ENCODE measurements at regions of chr19 and their contacts with region 1.

Region 1: DNA sequence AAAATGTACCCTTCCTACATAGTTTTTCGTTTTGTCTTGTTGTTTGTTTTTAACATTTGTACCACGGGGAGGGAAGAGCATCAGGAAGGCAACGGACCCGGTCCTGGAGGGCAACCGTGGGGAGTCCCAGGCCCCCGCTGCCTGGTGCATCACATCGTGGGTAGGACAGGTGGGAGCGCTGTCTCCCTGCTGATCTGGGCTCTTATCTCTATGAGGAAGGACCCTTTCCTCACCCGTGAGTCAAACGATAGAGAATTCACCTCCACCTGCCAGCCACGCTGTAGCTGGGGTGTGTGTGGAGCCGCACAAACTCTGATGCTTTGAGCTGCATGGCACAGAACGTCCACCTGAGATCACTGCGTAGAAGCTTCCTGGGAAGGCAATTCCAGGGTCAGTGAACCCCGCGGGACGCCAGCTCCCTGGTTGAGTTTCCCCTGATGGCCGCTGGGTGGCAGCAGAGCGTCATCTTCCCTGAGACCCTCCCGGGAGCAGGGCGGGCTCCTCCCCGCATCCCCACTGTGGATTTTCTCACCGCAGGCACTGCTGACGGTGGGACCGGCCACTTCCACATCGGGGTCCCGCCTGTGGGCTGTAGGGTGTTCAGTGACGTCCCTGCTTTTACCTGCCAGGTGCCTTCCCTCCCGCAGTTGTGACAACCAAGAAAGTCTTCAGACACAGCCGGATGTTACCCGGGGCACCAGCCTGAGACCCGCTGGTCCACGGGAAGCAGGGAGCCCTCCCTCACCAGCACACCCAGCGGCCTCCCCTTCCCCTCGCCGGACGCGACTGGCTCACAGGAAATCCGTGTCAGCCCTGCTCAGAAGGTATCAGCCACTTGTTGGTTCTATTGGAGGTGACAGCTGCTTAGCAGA is 54.7 kb downstream of the ZNF787 start:
- DNase-seq: peak; percentile 42 to 80 (median 62)
- ATAC-seq: peak; percentile 47 to 86 (median 83)
- H3K4me3 ChIP-seq: peak overlapping the region in 10 of 12 donors; percentile 11 to 41 (median 27)
- H3K27ac ChIP-seq: no peak overlapping the region
- H3K4me1 ChIP-seq: peaks cover 0 to 9% (median 5%) of the 10 kb centered on the region in 12 donors
- H3K27me3 ChIP-seq: peaks cover 0 to 32% (median 0%) of the 10 kb centered on the region in 9 donors
- CTCF ChIP-seq: peak; percentile 83 to 94 (median 90)
- POLR2A ChIP-seq: no peak

Region 2: DNA sequence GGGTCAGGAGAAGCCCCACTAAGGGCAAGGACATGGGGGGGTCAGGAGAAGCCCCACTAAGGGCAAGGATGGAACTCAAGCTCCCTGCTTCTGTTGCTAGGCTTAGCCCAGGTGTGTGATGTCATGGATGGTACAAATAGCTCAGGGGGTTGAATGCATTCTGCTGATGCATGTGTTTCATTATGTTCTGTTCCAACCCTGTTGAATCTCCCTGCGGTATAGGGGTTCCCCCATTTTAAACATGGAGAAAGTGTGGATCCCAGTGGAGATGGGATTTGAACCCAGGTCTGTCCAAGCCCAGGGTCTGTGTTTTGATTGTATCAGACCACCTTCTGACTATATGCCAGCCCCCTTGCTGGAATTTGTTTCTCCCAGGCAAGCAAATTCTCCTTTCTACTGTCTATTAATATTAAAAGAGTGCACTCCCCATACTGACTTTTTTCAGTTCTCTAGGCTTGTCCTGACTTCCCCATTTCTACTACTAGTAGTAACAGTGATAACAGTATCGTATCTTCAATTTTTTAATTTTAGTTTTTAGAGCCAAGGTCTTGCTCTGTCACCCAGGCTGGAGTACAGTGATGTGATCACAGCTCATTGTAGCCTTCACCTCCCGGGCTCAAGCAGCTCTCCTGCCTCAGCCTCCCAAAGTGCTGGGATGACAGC is 454.3 kb before region 1 on chr19:
- intact Hi-C with region 1: no loop called
- DNase-seq: no peak
- ATAC-seq: peak; percentile 1 to 50 (median 19)
- H3K4me3 ChIP-seq: no peak overlapping the region
- H3K27ac ChIP-seq: peak overlapping the region; percentile 38 to 93 (median 77)
- H3K4me1 ChIP-seq: peaks cover 0 to 43% (median 25%) of the 10 kb centered on the region in 12 donors
- H3K27me3 ChIP-seq: no peaks in the 10 kb centered on the region
- CTCF ChIP-seq: no peak
- POLR2A ChIP-seq: no peak

Region 3: GRCh38 chr19:55966589-55966988 is 99.8 kb before region 1 on chr19:
- intact Hi-C with region 1: no loop called
- DNase-seq: no peak
- ATAC-seq: no peak
- H3K4me3 ChIP-seq: no peak overlapping the region
- H3K27ac ChIP-seq: no peak overlapping the region
- H3K4me1 ChIP-seq: no peaks in the 10 kb centered on the region
- H3K27me3 ChIP-seq: peaks cover 0 to 3% (median 0%) of the 10 kb centered on the region in 9 donors
- CTCF ChIP-seq: no peak
- POLR2A ChIP-seq: no peak

Region 4: GRCh38 chr19:56350416-56351045 is 284.1 kb after region 1 on chr19:
- intact Hi-C with region 1: loop called in 4 of 10 experiments (anchors 1 to 10 kb)
- DNase-seq: peak in 3 of 5 donors; percentile 22 to 33 (median 26)
- ATAC-seq: peak in 2 of 4 donors; percentile 47 to 50
- H3K4me3 ChIP-seq: no peak overlapping the region
- H3K27ac ChIP-seq: no peak overlapping the region
- H3K4me1 ChIP-seq: no peaks in the 10 kb centered on the region
- H3K27me3 ChIP-seq: no peaks in the 10 kb centered on the region
- CTCF ChIP-seq: peak; percentile 76 to 95 (median 88)
- POLR2A ChIP-seq: no peak

Region 5: DNA sequence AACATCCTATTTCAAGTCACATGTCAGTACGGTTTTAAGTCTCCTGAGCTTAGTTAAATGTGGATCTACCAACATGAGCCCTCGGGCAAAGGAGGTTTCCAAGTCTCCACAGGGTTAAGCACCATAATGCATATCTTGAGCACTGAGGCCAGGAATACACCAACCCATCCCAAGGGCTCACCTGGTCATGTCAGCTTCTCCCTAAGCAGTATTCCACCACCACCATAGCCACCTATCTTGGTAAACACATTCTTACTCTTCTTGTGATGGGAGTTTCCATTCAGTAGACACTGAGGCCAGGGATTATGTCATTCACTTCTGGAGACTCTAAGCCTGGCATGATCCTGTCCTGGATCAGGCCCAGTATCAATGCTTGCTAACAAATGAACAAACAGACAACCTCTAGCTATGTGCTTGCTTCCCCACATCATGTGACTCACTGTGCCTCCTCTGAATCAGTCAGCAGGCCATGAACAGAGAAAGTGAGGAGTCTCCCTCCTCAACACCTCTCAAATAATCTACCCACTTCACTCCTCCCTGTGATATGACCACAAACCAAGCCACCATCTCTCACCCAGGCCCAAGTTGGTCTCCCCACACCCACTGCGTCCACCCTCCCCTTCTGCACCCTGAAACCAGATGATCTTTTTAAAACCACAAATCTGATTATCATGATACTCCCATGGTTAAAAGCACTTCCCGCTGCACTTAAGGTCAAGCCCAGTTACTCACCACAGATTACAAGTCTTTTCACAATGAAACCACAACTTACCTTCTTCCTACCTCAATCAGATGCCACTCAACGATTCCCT is 768.4 kb after region 1 on chr19:
- intact Hi-C with region 1: no loop called
- DNase-seq: no peak
- ATAC-seq: no peak
- H3K4me3 ChIP-seq: no peak overlapping the region
- H3K27ac ChIP-seq: no peak overlapping the region
- H3K4me1 ChIP-seq: peaks cover 0 to 14% (median 0%) of the 10 kb centered on the region in 12 donors
- H3K27me3 ChIP-seq: no peaks in the 10 kb centered on the region
- CTCF ChIP-seq: no peak
- POLR2A ChIP-seq: no peak

Measured in heart left ventricle (tissue), 16 donors.